A673 (cell line): ENCODE measurements at regions of chr2 and their contacts with region 1.

Region 1: GRCh38 chr2:139916822-139917221 is 1136.6 kb upstream of the NXPH2 start:
- DNase-seq: peak; percentile 65
- H3K4me3 ChIP-seq: no peak overlapping the region
- H3K27ac ChIP-seq: no peak overlapping the region
- H3K4me1 ChIP-seq: no peaks in the 10 kb centered on the region
- H3K27me3 ChIP-seq: no peaks in the 10 kb centered on the region
- CTCF ChIP-seq: peak; percentile 58

Region 2: DNA sequence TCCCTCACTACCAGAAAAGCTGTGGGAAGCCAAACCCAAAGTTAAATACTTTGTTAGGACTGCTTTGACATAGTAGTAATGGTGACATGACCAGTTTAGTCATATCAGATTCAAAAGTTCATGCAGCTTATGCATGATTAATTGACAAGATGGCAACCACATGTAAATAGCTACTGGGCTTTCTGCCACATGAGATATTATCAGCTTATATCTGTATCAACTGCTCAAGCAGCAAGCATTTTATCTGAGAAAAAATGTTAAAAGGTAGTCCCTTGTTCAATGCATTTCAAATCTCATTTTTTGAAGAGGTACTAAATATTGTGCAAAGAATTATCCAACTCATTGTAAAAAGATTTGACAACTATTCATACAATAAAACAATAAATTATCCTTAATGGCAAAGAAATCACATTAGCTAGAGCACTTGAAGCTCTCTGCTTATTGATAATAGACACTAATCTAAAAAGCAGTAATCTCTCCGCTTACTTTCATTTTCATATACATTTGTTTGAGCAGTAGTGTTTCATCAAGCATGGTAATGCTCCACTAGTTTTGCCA is 143.0 kb before region 1 on chr2:
- CTCF ChIA-PET with region 1: no interaction called
- POLR2A ChIA-PET with region 1: no interaction called
- intact Hi-C with region 1: no loop called
- DNase-seq: peak; percentile 41
- H3K4me3 ChIP-seq: no peak overlapping the region
- H3K27ac ChIP-seq: no peak overlapping the region
- H3K4me1 ChIP-seq: no peaks in the 10 kb centered on the region
- H3K27me3 ChIP-seq: no peaks in the 10 kb centered on the region
- CTCF ChIP-seq: no peak

Region 3: DNA sequence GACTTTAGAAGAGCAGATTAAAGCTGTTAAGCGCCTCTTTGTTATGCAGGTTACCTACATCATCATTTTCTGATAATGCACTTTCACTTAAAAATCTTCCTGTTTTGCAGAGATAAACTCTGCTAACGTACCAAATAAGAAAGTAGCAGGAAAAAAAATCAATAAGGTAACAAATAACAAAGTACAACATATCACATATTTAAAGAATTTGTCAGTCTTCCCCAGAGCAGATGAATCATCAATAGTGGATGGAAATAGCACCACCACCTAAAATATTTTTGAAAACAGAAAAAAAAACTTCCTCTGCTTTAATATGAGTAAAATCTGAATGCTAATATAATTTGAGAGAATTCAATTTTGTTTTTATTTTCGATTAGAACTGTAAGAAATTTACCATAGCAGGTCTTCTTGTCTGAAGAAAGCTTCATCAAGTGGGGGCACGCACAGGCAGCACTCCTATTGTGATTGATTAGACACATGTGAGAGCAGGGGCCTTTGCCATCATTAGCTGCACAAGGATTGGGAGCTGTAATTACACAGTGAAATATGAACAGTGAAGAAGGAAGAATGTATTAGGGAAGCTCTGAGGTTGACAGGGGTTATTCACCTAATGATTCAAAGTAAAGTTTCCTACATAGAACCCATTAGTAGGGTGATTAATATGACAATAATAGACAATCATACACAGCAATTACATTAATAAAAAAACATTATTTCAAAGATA is 934.6 kb after region 1 on chr2:
- CTCF ChIA-PET with region 1: no interaction called
- POLR2A ChIA-PET with region 1: no interaction called
- intact Hi-C with region 1: loop called (anchors 10 kb)
- DNase-seq: no peak
- H3K4me3 ChIP-seq: no peak overlapping the region
- H3K27ac ChIP-seq: no peak overlapping the region
- H3K4me1 ChIP-seq: no peaks in the 10 kb centered on the region
- H3K27me3 ChIP-seq: no peaks in the 10 kb centered on the region
- CTCF ChIP-seq: no peak